Naive thymus-derived CD4-positive, alpha-beta T cell (primary cell): ENCODE measurements at regions of chr9 and their contacts with region 1.

Region 1: DNA sequence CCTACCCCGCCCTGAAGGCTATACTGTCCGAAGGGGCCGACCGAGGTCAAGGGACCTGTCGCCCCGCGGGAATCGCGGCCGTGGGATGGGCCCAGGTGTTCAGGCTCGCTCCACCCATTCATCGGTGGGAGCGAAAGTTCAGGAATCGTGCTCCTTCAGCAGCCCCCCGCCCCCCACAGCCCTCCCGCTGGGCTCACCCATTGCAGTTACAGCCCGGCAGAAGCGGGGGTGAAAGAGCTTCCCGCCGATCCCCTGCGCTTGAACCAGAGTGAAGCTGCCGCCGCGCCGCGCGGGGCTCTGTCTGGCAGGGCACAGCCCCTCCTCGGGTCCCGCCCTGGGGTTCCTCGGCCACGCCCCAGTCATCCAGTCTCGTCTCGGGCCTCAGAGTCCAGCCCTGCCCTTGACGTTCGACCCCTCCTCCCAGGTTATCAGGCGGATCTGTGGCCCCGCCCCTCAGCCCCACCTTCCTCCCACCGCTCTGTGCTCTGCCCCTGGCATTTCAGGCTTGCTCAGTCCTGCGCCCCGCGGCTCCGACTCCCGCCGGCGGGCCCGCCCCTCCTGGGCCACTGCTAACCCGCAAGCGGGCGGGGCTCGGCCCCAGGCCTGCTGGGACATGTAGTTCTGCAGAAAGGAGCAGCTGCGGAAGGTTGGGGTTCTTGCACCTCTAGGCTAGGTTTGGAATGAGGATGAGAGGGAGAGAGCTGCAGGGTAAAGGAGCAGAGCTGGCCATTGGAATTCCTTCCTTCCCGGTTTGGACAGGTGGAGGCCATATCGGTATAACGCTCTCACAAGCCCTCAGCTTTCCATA is at the start of gene MYORG:
- DNase-seq: peak; percentile 85 to 96 (median 93)
- ATAC-seq: peak; percentile 86
- H3K4me3 ChIP-seq: peak within 1 kb of the TSS; percentile 82
- H3K4me3 Mint-ChIP-seq: peak within 1 kb of the TSS; percentile 78 to 94 (median 91)
- H3K27ac ChIP-seq: peak within 1 kb of the TSS; percentile 57
- H3K27ac Mint-ChIP-seq: peak within 1 kb of the TSS; percentile 52 to 92 (median 81)
- H3K4me1 ChIP-seq: peaks cover 16 to 22% of the 10 kb centered on the region in 2 donors
- H3K4me1 Mint-ChIP-seq: peaks cover 27 to 49% (median 45%) of the 10 kb centered on the region in 7 donors
- H3K27me3 ChIP-seq: no peaks in the 10 kb centered on the region
- H3K27me3 Mint-ChIP-seq: peaks cover 0 to 5% (median 0%) of the 10 kb centered on the region in 5 donors
- total RNA-seq, gene MYORG: 0.60 to 1.9 (median 0.78) TPM

Region 2: DNA sequence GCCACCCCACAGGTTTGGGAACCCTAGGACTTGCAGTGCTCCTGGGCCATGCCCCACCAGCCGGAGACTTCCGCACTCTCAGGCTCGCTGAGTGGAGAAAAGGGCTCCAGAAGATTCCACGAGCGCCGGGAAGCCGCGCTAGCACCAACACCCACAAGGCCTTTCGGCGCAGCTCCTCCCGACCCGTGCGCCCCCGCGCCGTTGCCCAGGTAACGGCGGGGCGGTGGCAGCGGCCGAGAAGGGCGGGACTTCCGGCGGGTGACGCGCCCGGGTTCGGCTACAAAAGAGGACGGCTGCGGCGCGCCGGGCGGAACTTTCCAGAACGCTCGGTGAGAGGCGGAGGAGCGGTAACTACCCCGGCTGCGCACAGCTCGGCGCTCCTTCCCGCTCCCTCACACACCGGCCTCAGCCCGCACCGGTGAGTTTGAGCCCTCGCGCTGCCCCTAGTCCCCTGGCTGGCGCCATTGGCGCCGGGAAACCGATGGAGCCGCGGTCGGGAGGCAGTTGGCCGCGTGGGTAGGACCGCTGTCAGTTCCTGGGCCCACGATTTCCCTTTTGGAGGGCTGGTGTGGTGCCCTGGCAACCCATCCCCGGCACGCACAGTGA is 1351.7 kb before region 1 on chr9 and contains the start of gene DNAJA1:
- CTCF ChIA-PET with region 1: no interaction called
- POLR2A ChIA-PET with region 1: no interaction called
- intact Hi-C with region 1: loop called in 1 of 2 experiments (anchors 2 kb)
- DNase-seq: peak; percentile 92 to 99 (median 97)
- ATAC-seq: peak; percentile 91
- H3K4me3 ChIP-seq: peak within 1 kb of the TSS; percentile 98
- H3K4me3 Mint-ChIP-seq: peak within 1 kb of the TSS; percentile 91 to 99 (median 96)
- H3K27ac ChIP-seq: peak within 1 kb of the TSS; percentile 100
- H3K27ac Mint-ChIP-seq: peak within 1 kb of the TSS; percentile 82 to 98 (median 95)
- H3K4me1 ChIP-seq: peaks cover 37 to 49% of the 10 kb centered on the region in 2 donors
- H3K4me1 Mint-ChIP-seq: peaks cover 51 to 83% (median 78%) of the 10 kb centered on the region in 7 donors
- H3K27me3 ChIP-seq: no peaks in the 10 kb centered on the region
- H3K27me3 Mint-ChIP-seq: no peaks in the 10 kb centered on the region
- total RNA-seq, gene DNAJA1: 66.8 to 204 (median 119) TPM

Region 3: DNA sequence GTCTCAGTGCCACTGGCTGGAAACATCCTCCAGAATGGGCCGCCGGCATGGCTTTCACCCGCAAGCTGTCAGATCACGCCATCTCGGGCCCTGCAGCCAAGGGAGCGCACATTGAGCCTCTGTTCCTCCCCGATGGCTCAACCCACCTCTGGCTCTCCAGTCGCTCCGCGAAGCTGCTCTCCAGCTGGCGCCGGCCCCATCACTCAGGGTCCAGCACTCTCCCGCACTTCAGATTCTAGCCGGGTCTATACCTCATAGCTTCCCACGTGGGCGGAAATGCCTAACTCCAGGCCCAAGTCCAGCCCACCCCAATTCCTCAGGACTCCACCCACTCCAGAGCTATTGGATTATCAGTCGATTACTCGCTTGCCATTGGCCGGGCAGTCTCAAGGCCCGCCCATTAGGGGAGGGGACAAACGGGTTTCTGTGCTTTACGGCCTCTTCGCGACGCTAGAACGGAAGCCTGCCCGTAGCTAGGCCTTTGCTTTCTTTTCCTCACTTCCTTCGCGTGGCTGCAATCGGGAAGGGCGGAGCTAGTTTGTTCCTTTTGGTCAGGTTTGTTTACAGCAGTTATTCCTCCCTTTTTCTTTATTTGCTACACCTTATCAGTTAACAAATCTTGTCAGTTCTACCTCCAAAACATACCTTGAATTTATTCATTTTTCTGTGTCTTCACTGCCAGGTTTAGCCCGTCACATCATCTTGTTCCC is 903.0 kb before region 1 on chr9 and contains the start of gene NOL6:
- CTCF ChIA-PET with region 1: no interaction called
- POLR2A ChIA-PET with region 1: no interaction called
- intact Hi-C with region 1: no loop called
- DNase-seq: peak; percentile 91 to 99 (median 98)
- ATAC-seq: peak; percentile 100
- H3K4me3 ChIP-seq: peak within 1 kb of the TSS; percentile 88
- H3K4me3 Mint-ChIP-seq: peak within 1 kb of the TSS; percentile 88 to 100 (median 97)
- H3K27ac ChIP-seq: peak within 1 kb of the TSS; percentile 78
- H3K27ac Mint-ChIP-seq: peak within 1 kb of the TSS; percentile 88 to 99 (median 96)
- H3K4me1 ChIP-seq: peaks cover 13 to 19% of the 10 kb centered on the region in 2 donors
- H3K4me1 Mint-ChIP-seq: peaks cover 9 to 38% (median 31%) of the 10 kb centered on the region in 7 donors
- H3K27me3 ChIP-seq: no peaks in the 10 kb centered on the region
- H3K27me3 Mint-ChIP-seq: no peaks in the 10 kb centered on the region
- total RNA-seq, gene NOL6: 34.0 to 48.0 (median 44.0) TPM

Region 4: GRCh38 chr9:34048923-34049697 is 327.7 kb before region 1 on chr9:
- CTCF ChIA-PET with region 1: no interaction called
- POLR2A ChIA-PET with region 1: no interaction called
- intact Hi-C with region 1: loop called (anchors 1 kb)
- DNase-seq: peak; percentile 96 to 99 (median 97)
- ATAC-seq: peak; percentile 93
- H3K4me3 ChIP-seq: peak overlapping the region; percentile 98
- H3K4me3 Mint-ChIP-seq: peak overlapping the region; percentile 96 to 100 (median 98)
- H3K27ac ChIP-seq: peak overlapping the region; percentile 86
- H3K27ac Mint-ChIP-seq: peak overlapping the region; percentile 98 to 100 (median 99)
- H3K4me1 ChIP-seq: peaks cover 11 to 22% of the 10 kb centered on the region in 2 donors
- H3K4me1 Mint-ChIP-seq: peaks cover 25 to 55% (median 31%) of the 10 kb centered on the region in 7 donors
- H3K27me3 ChIP-seq: no peaks in the 10 kb centered on the region
- H3K27me3 Mint-ChIP-seq: peaks cover 0 to 4% (median 0%) of the 10 kb centered on the region in 5 donors

Region 5: GRCh38 chr9:34328987-34329832 is 47.6 kb before region 1 on chr9 and contains the starts of genes KIF24 and NUDT2:
- CTCF ChIA-PET with region 1: interaction called, 39 read pairs
- POLR2A ChIA-PET with region 1: interaction called, 62 read pairs
- intact Hi-C with region 1: loop called (anchors 1 kb)
- DNase-seq: peak; percentile 89 to 99 (median 96)
- ATAC-seq: peak; percentile 95
- H3K4me3 ChIP-seq: peak within 1 kb of the TSS; percentile 98
- H3K4me3 Mint-ChIP-seq: peak within 1 kb of the TSS; percentile 88 to 97 (median 94)
- H3K27ac ChIP-seq: peak within 1 kb of the TSS; percentile 94
- H3K27ac Mint-ChIP-seq: peak within 1 kb of the TSS; percentile 77 to 98 (median 95)
- H3K4me1 ChIP-seq: peaks cover 3 to 8% of the 10 kb centered on the region in 2 donors
- H3K4me1 Mint-ChIP-seq: peaks cover 11 to 45% (median 29%) of the 10 kb centered on the region in 7 donors
- H3K27me3 ChIP-seq: no peaks in the 10 kb centered on the region
- H3K27me3 Mint-ChIP-seq: no peaks in the 10 kb centered on the region
- total RNA-seq, gene KIF24: 0.11 to 6.0 (median 0.35) TPM
- total RNA-seq, gene NUDT2: 7.5 to 30.0 (median 22.7) TPM

Region 6: GRCh38 chr9:34500623-34501267 is 123.9 kb after region 1 on chr9:
- CTCF ChIA-PET with region 1: no interaction called
- POLR2A ChIA-PET with region 1: no interaction called
- intact Hi-C with region 1: loop called in 1 of 2 experiments (anchors 1 kb)
- DNase-seq: peak; percentile 38 to 80 (median 61)
- ATAC-seq: peak; percentile 90
- H3K4me3 ChIP-seq: no peak overlapping the region
- H3K4me3 Mint-ChIP-seq: no peak overlapping the region
- H3K27ac ChIP-seq: no peak overlapping the region
- H3K27ac Mint-ChIP-seq: no peak overlapping the region
- H3K4me1 ChIP-seq: no peaks in the 10 kb centered on the region
- H3K4me1 Mint-ChIP-seq: peaks cover 0 to 2% (median 0%) of the 10 kb centered on the region in 7 donors
- H3K27me3 ChIP-seq: no peaks in the 10 kb centered on the region
- H3K27me3 Mint-ChIP-seq: peaks cover 0 to 19% (median 0%) of the 10 kb centered on the region in 5 donors

Region 7: GRCh38 chr9:34989003-34989945 is 612.5 kb after region 1 on chr9 and contains the start of gene DNAJB5:
- CTCF ChIA-PET with region 1: no interaction called
- POLR2A ChIA-PET with region 1: no interaction called
- intact Hi-C with region 1: loop called in 1 of 2 experiments (anchors 1 kb)
- DNase-seq: peak; percentile 96 to 98 (median 97)
- ATAC-seq: peak; percentile 96
- H3K4me3 ChIP-seq: peak within 1 kb of the TSS; percentile 77
- H3K4me3 Mint-ChIP-seq: peak within 1 kb of the TSS; percentile 85 to 100 (median 96)
- H3K27ac ChIP-seq: peak within 1 kb of the TSS; percentile 77
- H3K27ac Mint-ChIP-seq: peak within 1 kb of the TSS; percentile 64 to 94 (median 89)
- H3K4me1 ChIP-seq: peaks cover 19 to 37% of the 10 kb centered on the region in 2 donors
- H3K4me1 Mint-ChIP-seq: peaks cover 35 to 62% (median 49%) of the 10 kb centered on the region in 7 donors
- H3K27me3 ChIP-seq: no peaks in the 10 kb centered on the region
- H3K27me3 Mint-ChIP-seq: no peaks in the 10 kb centered on the region
- total RNA-seq, gene DNAJB5: 1.1 to 3.7 (median 1.4) TPM

Region 8: GRCh38 chr9:35814841-35815543 is 1438.2 kb after region 1 on chr9 and contains the start of gene HINT2:
- CTCF ChIA-PET with region 1: no interaction called
- POLR2A ChIA-PET with region 1: no interaction called
- intact Hi-C with region 1: loop called in 1 of 2 experiments (anchors 10 kb)
- DNase-seq: peak; percentile 84 to 98 (median 96)
- ATAC-seq: peak; percentile 86
- H3K4me3 ChIP-seq: peak within 1 kb of the TSS; percentile 100
- H3K4me3 Mint-ChIP-seq: peak within 1 kb of the TSS; percentile 91 to 100 (median 96)
- H3K27ac ChIP-seq: peak within 1 kb of the TSS; percentile 77
- H3K27ac Mint-ChIP-seq: peak within 1 kb of the TSS; percentile 87 to 99 (median 95)
- H3K4me1 ChIP-seq: peaks cover 19 to 27% of the 10 kb centered on the region in 2 donors
- H3K4me1 Mint-ChIP-seq: peaks cover 23 to 43% (median 38%) of the 10 kb centered on the region in 7 donors
- H3K27me3 ChIP-seq: no peaks in the 10 kb centered on the region
- H3K27me3 Mint-ChIP-seq: peaks cover 0 to 12% (median 0%) of the 10 kb centered on the region in 5 donors
- total RNA-seq, gene HINT2: 14.3 to 50.7 (median 22.2) TPM